ENCODE measurements at regions of chr10 and their contacts with region 1.

Region 1: DNA sequence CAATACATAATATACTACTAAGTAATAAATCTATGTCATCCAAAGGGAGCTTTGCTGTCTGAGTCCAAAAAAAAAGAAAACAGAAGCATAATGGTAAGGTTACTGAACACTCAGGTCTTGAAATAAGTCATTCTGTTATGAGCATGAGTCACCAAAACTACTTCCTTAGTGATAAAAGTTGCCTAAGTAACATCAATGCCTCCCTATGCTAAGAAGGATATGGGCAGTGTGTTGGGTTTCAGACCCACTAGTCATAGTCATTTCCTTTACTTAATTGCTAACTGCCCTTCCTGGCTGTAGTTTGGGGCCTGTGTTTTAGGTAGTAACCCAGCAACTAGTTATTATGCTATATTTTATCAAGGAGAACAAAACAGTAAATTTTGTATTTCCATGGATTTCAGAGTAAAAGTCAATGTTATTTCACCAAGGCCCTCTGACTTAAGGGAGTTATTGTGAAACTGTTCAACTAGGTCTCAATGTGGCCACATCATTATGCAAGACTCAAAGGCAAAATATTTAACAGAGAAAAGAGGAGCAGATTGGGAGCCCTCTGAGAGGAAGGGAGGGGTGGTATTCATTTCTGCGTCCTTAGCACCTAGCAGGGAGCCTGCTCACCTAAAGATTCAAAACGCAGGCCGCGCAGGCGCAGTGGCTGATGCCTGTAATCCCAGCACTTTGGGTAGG is 11.7 kb upstream of the VIM start:
- H3K4me3 ChIP-seq: no peak overlapping the region
- H3K27ac ChIP-seq: 0 out of 2 replicates have a peak overlapping the region, but pooled peaks have one; percentile 4
- H3K4me1 ChIP-seq: peaks cover 8% of the 10 kb centered on the region
- CTCF ChIP-seq: no peak

Region 2: DNA sequence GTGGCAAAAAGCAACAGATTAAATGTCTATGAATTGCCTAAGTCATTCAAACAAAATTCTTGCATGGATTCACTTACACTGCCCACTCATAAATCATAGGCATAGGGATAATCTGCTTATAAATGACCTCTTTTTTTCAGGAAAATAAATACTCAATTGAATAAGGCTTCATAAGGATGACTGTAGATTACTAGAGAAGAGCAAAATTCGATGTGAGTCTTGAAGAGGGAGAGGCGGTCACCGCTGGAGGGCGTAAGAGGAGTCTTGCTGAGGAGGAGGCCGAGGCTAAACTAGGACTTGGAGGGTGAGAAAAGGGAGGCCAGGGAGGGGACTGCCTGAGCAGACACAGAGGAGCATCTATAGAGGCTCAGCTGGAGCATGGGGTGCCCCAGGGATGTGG is 263.7 kb before region 1 on chr10:
- CTCF ChIA-PET with region 1: interaction called, 11 read pairs
- POLR2A ChIA-PET with region 1: no interaction called
- H3K4me3 ChIP-seq: no peak overlapping the region
- H3K27ac ChIP-seq: no peak overlapping the region
- H3K4me1 ChIP-seq: peaks cover 4% of the 10 kb centered on the region
- CTCF ChIP-seq: no peak

Region 3: GRCh38 chr10:17249820-17250219 is 33.5 kb after region 1 on chr10:
- CTCF ChIA-PET with region 1: no interaction called
- POLR2A ChIA-PET with region 1: no interaction called
- H3K4me3 ChIP-seq: no peak overlapping the region
- H3K27ac ChIP-seq: no peak overlapping the region
- H3K4me1 ChIP-seq: no peaks in the 10 kb centered on the region
- CTCF ChIP-seq: no peak; the same call in 1 of the 2 replicates

Region 4: DNA sequence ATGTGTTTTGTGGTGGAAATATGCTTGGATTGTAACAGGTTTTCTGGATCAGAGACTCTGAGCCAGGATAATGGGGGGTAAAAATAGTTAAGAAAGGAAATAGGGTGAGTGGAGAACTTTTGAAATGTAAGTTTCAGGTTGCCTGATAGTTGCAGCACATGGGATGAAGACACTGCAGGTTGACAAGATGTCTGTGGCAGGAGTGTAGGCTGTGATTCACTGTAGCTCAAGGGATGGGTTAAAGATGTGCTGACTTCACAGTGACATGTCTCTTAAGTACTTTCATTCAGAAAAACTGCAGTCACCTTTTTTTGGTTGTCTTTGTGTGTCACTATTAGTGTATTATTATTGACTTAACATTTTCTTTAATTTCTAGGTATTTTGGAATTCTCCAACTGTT is 671.8 kb after region 1 on chr10:
- CTCF ChIA-PET with region 1: no interaction called
- POLR2A ChIA-PET with region 1: no interaction called
- H3K4me3 ChIP-seq: no peak overlapping the region
- H3K27ac ChIP-seq: no peak overlapping the region
- H3K4me1 ChIP-seq: no peaks in the 10 kb centered on the region
- CTCF ChIP-seq: no peak

Measured in HEK293 (cell line).